ENCODE measurements at regions of chr1 and their contacts with region 1.

Region 1: GRCh38 chr1:21963477-21964217 is 13.2 kb upstream of the CELA3B start:
- DNase-seq: peak; percentile 92
- H3K4me3 ChIP-seq: no peak overlapping the region
- H3K27ac ChIP-seq: no peak overlapping the region
- H3K4me1 ChIP-seq: no peaks in the 10 kb centered on the region
- H3K27me3 ChIP-seq: no peaks in the 10 kb centered on the region
- CTCF ChIP-seq: peak; percentile 90

Region 2: DNA sequence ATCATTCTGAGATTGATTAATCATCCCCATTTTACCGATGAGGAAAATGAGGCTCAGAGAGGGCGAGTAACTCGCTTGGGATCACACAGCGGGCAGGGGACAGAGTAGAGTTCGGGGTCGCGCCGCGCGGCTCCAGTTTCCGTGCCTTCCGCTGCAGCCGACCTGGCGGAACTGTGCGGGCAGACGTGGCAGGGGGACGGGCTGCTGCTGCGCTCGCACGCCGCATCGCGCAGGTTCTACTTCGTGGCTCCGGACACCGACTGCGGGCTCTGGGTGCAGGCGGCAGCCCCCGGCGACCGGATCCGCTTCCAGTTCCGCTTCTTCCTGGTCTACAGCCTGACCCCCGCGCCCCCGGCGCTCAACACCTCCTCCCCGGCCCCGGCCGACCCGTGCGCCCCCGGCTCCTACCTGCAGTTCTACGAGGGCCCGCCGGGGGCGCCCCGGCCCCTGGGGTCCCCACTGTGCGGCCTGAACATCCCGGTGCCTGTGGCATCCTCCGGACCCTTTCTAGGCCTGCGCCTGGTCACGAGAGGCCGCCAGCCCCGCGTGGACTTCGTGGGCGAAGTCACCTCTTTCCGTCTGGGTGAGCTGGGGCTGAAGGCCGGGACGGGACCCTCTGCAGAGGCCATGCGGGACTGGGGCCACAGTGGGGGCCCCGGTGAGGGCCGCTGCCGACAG is 149.3 kb before region 1 on chr1:
- intact Hi-C with region 1: loop called (anchors 10 kb)
- DNase-seq: no peak
- H3K4me3 ChIP-seq: peak overlapping the region; percentile 34
- H3K27ac ChIP-seq: no peak overlapping the region
- H3K4me1 ChIP-seq: no peaks in the 10 kb centered on the region
- H3K27me3 ChIP-seq: no peaks in the 10 kb centered on the region
- CTCF ChIP-seq: peak; percentile 42

Region 3: GRCh38 chr1:21874778-21875547 is 88.7 kb before region 1 on chr1:
- intact Hi-C with region 1: loop called (anchors 5 kb)
- DNase-seq: no peak
- H3K4me3 ChIP-seq: no peak overlapping the region
- H3K27ac ChIP-seq: no peak overlapping the region
- H3K4me1 ChIP-seq: no peaks in the 10 kb centered on the region
- H3K27me3 ChIP-seq: no peaks in the 10 kb centered on the region
- CTCF ChIP-seq: no peak

Measured in colonic mucosa (tissue), 4 donors.